GM10248 (cell line): ENCODE measurements at regions of chr14 and their contacts with region 1.

Region 1: GRCh38 chr14:24271134-24271833 is at the start of gene RABGGTA:
- DNase-seq: peak; percentile 96
- CTCF ChIP-seq: peak; percentile 88

Region 2: DNA sequence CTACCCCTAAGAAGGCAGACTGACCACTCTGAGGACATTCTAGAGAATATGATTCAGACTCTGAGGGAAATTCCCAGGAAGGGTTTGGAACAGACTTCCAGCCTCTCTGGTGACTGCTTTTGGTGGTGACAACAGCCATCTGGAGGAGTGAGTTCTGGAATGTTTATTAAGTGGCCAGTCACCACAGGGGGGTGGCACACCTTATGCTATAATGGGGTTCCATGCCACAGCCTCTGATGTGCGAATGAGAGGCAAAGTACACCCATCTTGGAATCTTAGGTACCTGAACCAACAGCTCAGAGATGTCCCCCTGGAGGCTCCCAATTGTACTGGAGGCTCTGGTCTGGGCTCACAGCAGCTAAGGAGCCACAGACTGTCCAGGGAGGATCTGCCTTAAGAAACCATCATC is 19.4 kb before region 1 on chr14:
- CTCF ChIA-PET with region 1: interaction called, 32 read pairs
- POLR2A ChIA-PET with region 1: interaction called, 9 read pairs
- DNase-seq: no peak
- CTCF ChIP-seq: no peak

Region 3: DNA sequence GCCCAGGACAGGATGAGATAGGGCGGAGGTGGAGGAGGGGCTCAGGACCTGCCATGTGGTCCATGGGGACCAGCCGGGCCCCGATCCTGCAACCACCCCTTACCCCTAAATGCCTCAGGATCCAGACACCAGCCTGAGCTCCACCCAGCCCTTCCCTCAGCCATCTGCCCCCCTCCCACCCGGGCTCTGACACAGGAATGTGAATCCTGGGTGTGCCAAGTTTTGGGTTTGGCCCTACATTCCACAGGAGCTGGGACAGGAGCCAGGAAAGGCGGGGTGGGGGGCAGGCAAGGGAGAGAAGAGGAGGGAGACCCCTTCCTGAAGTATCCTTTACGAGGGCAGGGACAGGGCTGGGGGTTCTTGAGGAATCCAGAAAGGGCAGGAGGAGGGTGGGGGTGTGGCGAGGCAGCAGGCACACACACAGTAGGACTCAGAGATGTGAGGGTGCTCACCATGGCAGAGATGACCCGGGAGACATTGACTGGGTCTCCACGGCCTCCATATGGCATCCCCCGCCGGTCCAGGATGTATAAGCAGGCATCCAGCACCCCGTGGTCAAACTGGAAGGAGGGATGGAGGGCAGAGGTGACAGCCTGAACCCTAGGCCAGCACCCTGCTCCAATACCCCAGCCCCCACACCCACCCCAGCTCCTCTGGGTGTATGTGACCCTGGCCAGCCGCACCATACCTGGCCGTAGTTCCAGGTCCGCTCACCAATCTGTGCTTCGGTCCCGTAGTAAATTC is 11.9 kb before region 1 on chr14:
- CTCF ChIA-PET with region 1: interaction called, 10 read pairs
- POLR2A ChIA-PET with region 1: interaction called, 6 read pairs
- DNase-seq: no peak
- CTCF ChIP-seq: no peak

Region 4: GRCh38 chr14:24289649-24290249 is 18.5 kb after region 1 on chr14:
- CTCF ChIA-PET with region 1: interaction called, 68 read pairs
- POLR2A ChIA-PET with region 1: interaction called, 3 read pairs
- DNase-seq: peak; percentile 58
- CTCF ChIP-seq: no peak

Region 5: GRCh38 chr14:24372701-24373416 is 101.6 kb after region 1 on chr14:
- CTCF ChIA-PET with region 1: no interaction called
- POLR2A ChIA-PET with region 1: no interaction called
- DNase-seq: no peak
- CTCF ChIP-seq: no peak